Activated CD4-positive, alpha-beta T cell treated with anti-CD3 and anti-CD28 coated beads for 36 hours (primary cell): ENCODE measurements at regions of chr1 and their contacts with region 1.

Region 1: GRCh38 chr1:160085686-160086455 is 4.5 kb downstream of the KCNJ9 start:
- DNase-seq: peak; percentile 91
- ATAC-seq: peak; percentile 76
- H3K4me3 Mint-ChIP-seq: no peak overlapping the region
- H3K27ac Mint-ChIP-seq: no peak overlapping the region
- H3K4me1 Mint-ChIP-seq: peaks cover 12% of the 10 kb centered on the region
- H3K27me3 Mint-ChIP-seq: peaks cover 20% of the 10 kb centered on the region

Region 2: GRCh38 chr1:159936273-159936904 is 149.5 kb before region 1 on chr1:
- CTCF ChIA-PET with region 1: interaction called, 3 read pairs
- POLR2A ChIA-PET with region 1: no interaction called
- intact Hi-C with region 1: loop called (anchors 2 to 5 kb)
- DNase-seq: peak; percentile 90
- ATAC-seq: peak; percentile 89
- H3K4me3 Mint-ChIP-seq: no peak overlapping the region
- H3K27ac Mint-ChIP-seq: no peak overlapping the region
- H3K4me1 Mint-ChIP-seq: peaks cover 5% of the 10 kb centered on the region
- H3K27me3 Mint-ChIP-seq: peaks cover 4% of the 10 kb centered on the region

Region 3: DNA sequence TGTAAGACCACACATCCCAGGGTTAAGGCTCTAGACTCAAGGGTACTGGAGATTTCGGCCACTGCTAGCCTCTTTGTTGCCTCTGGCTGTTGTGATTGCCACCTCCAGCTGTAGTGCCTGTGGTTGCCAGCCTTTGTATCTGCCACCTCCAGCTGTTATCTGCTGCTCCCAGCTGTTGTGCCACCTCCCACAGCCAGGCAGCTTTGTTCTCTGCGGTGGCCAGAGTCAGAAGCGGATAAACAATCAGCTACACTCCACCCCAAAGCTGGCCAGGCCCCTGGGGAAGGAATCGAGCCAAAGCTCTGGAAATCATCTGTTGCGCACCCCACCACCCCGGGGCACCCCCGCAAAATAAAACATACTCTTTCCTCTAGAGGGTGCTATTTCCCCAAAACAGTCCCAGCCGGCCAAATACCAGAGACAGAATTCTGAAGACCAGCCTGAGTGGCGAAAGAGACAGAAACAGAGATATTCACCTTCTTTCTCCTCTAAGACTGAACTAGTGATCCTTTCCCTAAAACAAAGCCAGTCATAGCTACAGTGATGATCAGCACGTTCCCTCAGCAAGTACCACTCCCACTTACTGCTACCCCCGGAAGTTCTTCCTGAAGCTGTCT is 39.3 kb before region 1 on chr1:
- CTCF ChIA-PET with region 1: interaction called, 636 read pairs
- POLR2A ChIA-PET with region 1: no interaction called
- intact Hi-C with region 1: loop called (anchors 1 kb)
- DNase-seq: peak; percentile 67
- ATAC-seq: peak; percentile 87
- H3K4me3 Mint-ChIP-seq: peak overlapping the region; percentile 55
- H3K27ac Mint-ChIP-seq: peak overlapping the region; percentile 81
- H3K4me1 Mint-ChIP-seq: peaks cover 12% of the 10 kb centered on the region
- H3K27me3 Mint-ChIP-seq: peaks cover 13% of the 10 kb centered on the region